Transverse colon (tissue), 4 donors: ENCODE measurements at regions of chr9 and their contacts with region 1.

Region 1: DNA sequence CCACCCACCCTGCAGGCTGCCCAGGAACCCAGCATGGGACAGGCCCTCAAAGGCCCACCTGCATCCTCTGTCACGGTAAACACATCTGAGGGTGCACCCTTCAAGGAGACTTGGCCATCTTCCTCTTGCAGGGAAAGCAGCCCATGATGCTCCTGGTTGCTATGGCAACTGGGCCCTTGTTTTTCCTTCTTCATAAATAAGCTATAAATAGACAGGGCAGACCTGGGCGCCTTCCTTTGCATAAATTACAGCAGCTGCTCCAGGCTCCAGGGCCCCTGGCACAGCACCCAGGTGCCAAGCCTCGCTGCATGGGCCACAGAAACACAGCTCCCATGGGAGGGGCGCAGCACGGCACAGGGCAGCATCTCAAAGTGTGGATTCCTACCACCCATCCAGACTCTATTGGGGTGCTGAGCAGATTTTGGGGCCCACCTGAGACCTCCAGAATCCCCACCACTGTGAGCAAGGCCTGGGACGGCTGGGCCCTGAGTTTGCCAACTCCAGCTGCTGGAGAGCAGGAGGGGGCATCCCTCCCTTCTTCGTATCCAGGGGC is 5.8 kb upstream of the PSMB7 start:
- DNase-seq: no peak
- H3K4me3 ChIP-seq: no peak overlapping the region
- H3K27ac ChIP-seq: no peak overlapping the region
- H3K4me1 ChIP-seq: no peaks in the 10 kb centered on the region
- H3K27me3 ChIP-seq: no peaks in the 10 kb centered on the region
- CTCF ChIP-seq: no peak
- EP300 ChIP-seq: no peak
- POLR2A ChIP-seq: no peak

Region 2: DNA sequence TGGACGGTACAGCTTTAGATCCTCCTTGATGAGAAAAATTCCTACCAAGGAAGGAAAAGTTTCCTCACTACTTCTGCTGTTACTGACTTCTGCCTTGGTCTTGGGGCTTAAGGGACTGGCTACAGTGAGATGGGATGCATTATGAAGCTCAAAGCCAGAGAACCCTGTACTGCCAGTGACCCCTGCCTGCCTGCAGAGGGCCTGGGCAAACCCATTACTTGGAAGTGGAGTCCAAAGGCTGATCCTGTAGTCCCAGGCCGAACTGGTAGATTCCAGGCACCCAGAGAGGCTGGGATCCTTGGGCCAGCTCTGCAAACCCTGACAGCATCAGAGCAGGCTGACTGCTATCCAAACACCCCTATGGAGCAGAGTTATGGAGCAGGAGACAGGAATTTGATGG is 111.8 kb after region 1 on chr9:
- in situ Hi-C with region 1: loop called in 2 of 4 experiments (anchors 10 kb)
- intact Hi-C with region 1: loop called (anchors 2 kb)
- DNase-seq: no peak
- H3K4me3 ChIP-seq: no peak overlapping the region
- H3K27ac ChIP-seq: no peak overlapping the region
- H3K4me1 ChIP-seq: no peaks in the 10 kb centered on the region
- H3K27me3 ChIP-seq: no peaks in the 10 kb centered on the region
- CTCF ChIP-seq: no peak
- EP300 ChIP-seq: no peak
- POLR2A ChIP-seq: no peak

Region 3: GRCh38 chr9:124537926-124538325 is 116.9 kb after region 1 on chr9:
- in situ Hi-C with region 1: loop called in 2 of 4 experiments (anchors 10 kb)
- intact Hi-C with region 1: loop called (anchors 2 kb)
- DNase-seq: peak; percentile 30
- H3K4me3 ChIP-seq: no peak overlapping the region
- H3K27ac ChIP-seq: no peak overlapping the region
- H3K4me1 ChIP-seq: no peaks in the 10 kb centered on the region
- H3K27me3 ChIP-seq: no peaks in the 10 kb centered on the region
- CTCF ChIP-seq: no peak
- EP300 ChIP-seq: no peak
- POLR2A ChIP-seq: no peak